ENCODE measurements at regions of chr5 and their contacts with region 1.

Region 1: DNA sequence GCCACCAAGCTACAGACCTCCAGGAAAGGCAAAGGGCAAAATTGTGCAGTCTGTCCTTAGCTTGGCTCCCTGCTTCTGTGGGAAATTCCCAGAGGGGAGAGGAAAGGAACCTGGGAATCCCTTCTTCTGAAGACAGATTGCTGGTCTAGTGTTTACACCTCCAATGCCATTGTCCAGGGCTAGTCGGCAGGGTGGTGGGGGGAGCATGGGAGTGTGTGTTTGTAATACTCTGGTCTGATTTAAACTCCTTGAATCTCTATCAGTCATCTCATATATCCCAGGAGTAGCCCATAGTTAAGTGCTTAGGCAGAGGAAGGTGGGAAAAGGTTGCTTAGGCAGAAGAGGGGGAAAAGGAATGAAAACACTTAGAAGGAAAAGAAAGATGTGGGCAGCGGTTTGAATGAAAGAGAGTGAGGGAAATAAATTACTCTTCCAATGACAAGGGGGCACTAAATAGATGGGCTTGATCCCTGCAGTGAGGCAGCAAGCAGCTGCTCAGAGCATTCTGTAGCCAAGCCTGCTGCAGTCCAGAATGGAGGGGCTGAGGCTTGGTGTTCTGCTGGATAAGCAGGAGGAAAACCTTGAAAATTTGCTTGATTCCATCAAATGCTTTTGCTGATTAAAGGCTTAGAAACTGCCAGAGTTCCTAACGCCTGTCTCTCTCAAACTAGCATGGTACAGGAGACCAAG is 86.8 kb upstream of the MAP1B start:
- DNase-seq: no peak
- ATAC-seq: no peak
- H3K4me3 ChIP-seq: no peak overlapping the region
- H3K27ac ChIP-seq: no peak overlapping the region
- H3K4me1 ChIP-seq: no peaks in the 10 kb centered on the region
- H3K27me3 ChIP-seq: no peaks in the 10 kb centered on the region
- CTCF ChIP-seq: no peak
- POLR2A ChIP-seq: no peak

Region 2: DNA sequence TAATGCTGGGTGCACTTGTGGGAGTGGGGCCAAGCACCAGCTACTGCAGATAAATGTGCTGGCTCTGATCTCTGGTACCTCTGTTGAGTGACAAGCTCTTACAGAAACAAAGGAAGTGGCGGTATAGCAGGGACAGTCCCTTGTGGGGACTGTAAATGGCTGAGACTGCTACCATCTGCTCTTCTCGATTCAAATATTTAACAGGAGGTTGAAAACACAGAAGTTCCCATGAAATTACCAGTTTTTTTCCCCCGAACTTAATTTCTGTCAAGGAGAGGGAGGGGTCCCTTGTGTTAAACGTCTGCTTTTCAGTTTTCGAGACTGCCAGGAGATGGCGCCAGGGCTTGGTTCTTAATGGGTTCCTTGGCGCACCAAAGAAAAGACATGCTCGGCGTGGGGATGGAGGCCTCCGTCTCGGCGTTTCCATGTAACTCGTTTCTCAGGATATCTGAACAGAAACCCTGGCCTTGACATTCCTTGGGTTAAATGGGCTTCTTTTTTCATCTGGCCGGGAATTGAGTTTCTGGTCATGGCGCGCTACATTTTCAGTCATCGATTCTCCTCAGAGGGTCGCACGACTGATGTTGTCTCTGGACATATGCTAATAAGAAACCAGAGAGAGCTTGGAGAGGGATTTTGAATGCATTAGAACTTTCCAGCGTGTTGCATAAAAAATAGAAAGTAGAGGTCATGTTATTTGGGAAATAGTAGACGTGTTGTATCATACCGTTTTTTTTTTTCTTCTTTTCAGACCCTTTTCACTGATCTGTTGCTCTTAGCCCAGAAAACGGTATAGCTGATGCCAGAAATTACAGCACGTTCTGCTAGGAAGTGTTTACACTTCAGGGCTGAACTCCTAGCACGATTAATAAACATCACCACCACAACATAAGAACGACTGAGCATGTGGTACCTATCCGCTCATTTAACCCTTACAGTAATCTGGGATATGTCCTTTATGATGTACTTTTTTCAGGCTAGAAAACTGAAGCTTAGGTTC is 237.4 kb before region 1 on chr5:
- intact Hi-C with region 1: loop called (anchors 10 kb)
- DNase-seq: peak; percentile 69 to 79 (median 72)
- ATAC-seq: peak; percentile 71
- H3K4me3 ChIP-seq: no peak overlapping the region
- H3K27ac ChIP-seq: no peak overlapping the region
- H3K4me1 ChIP-seq: no peaks in the 10 kb centered on the region
- H3K27me3 ChIP-seq: no peaks in the 10 kb centered on the region
- CTCF ChIP-seq: peak; percentile 53 to 73 (median 69)
- POLR2A ChIP-seq: no peak

Region 3: GRCh38 chr5:71938895-71939294 is 81.6 kb before region 1 on chr5:
- intact Hi-C with region 1: no loop called
- DNase-seq: peak; percentile 12 to 67 (median 38)
- ATAC-seq: peak; percentile 47
- H3K4me3 ChIP-seq: no peak overlapping the region
- H3K27ac ChIP-seq: no peak overlapping the region
- H3K4me1 ChIP-seq: no peaks in the 10 kb centered on the region
- H3K27me3 ChIP-seq: no peaks in the 10 kb centered on the region
- CTCF ChIP-seq: no peak
- POLR2A ChIP-seq: no peak

Region 4: DNA sequence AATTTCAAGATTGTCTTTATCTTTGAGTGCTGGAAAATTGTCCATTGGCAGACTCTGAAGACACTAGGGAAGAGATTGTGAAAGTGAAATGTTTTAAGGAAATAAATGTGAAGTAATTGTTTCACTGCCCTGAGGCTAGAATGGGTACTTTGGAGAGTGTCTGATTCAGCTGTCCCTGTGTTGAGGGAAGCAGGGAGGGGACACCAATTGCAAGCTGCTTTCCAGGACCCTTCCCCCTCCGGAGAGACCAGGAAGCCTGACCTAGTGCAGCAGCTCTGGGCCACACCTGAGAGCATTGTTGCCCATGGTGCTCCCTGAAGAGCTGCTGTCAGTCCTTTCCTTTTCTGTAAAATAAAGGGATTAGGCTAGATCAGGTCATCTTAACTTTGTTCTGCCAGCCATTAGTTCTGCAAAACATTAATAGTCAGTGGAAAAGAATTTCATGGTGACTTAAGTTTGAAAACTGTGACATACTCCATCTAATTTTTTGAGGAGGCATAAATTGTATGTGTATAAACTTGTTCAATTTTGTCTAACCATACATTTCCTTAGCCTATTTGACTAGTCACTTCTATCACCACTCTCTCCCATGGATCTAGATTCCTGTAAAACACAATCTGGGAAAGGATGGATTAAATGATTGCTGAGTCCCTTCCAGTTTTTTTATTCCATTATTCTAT is 105.6 kb after region 1 on chr5:
- intact Hi-C with region 1: no loop called
- DNase-seq: no peak
- ATAC-seq: no peak
- H3K4me3 ChIP-seq: no peak overlapping the region
- H3K27ac ChIP-seq: no peak overlapping the region
- H3K4me1 ChIP-seq: no peaks in the 10 kb centered on the region
- H3K27me3 ChIP-seq: no peaks in the 10 kb centered on the region
- CTCF ChIP-seq: no peak
- POLR2A ChIP-seq: no peak